Caco-2 (cell line): ENCODE measurements at regions of chr3 and their contacts with region 1.

Region 1: DNA sequence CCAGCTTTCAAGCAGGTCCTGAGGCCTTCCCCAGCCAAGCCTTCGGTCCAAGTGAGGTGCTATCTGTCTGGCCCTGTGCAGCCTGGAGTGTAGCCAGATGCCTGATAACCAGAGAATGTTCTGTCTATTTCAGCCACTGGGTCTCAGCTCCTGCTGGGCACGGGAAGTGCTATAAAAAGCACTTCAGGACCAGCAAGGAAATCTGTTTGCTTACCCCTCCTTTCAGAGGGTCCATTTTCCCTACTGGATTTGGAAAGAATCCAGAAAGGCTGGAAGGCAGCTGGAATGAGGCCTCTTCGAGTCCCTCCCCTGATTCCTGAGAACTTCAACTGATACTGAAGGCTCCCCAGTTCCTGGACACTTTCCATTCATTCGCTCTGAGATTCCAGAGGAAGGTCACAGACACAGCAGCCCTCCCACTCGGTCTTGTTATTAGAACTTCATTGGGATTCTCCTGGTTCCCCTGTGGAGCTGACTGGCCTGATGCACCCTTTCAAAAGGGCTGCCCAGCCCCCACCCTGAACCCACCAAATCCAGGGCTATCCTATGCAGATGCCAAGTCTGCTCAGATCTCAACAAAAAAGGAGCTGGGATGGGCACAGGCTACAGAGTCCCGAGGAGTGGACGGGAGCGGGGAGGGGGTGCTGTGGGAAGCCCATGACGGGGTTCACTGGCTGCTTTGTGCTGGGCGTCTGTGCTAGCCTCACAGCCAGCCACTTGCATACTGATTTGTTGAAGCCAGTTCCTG is 70.4 kb downstream of the UMPS start:
- DNase-seq: no peak
- H3K4me3 ChIP-seq: no peak overlapping the region
- H3K4me3 Mint-ChIP-seq: no peak overlapping the region
- H3K27ac Mint-ChIP-seq: no peak overlapping the region
- H3K4me1 ChIP-seq: no peaks in the 10 kb centered on the region
- H3K4me1 Mint-ChIP-seq: no peaks in the 10 kb centered on the region
- H3K27me3 ChIP-seq: no peaks in the 10 kb centered on the region
- H3K27me3 Mint-ChIP-seq: no peaks in the 10 kb centered on the region
- CTCF ChIP-seq: no peak

Region 2: GRCh38 chr3:124627501-124627908 is 173.2 kb before region 1 on chr3:
- CTCF ChIA-PET with region 1: no interaction called
- POLR2A ChIA-PET with region 1: no interaction called
- intact Hi-C with region 1: no loop called
- DNase-seq: peak; percentile 81 to 89
- H3K4me3 ChIP-seq: no peak overlapping the region
- H3K4me3 Mint-ChIP-seq: peak overlapping the region; percentile 46
- H3K27ac Mint-ChIP-seq: peak overlapping the region; percentile 62
- H3K4me1 ChIP-seq: peaks cover 70% of the 10 kb centered on the region
- H3K4me1 Mint-ChIP-seq: peaks cover 60% of the 10 kb centered on the region
- H3K27me3 ChIP-seq: no peaks in the 10 kb centered on the region
- H3K27me3 Mint-ChIP-seq: no peaks in the 10 kb centered on the region
- CTCF ChIP-seq: no peak

Region 3: GRCh38 chr3:124812291-124813265 is 11.9 kb after region 1 on chr3:
- CTCF ChIA-PET with region 1: no interaction called
- POLR2A ChIA-PET with region 1: no interaction called
- intact Hi-C with region 1: loop called (anchors 1 kb)
- DNase-seq: peak in 1 of 2 experiments; percentile 53
- H3K4me3 ChIP-seq: no peak overlapping the region
- H3K4me3 Mint-ChIP-seq: no peak overlapping the region
- H3K27ac Mint-ChIP-seq: peak overlapping the region; percentile 85
- H3K4me1 ChIP-seq: peaks cover 52% of the 10 kb centered on the region
- H3K4me1 Mint-ChIP-seq: peaks cover 14% of the 10 kb centered on the region
- H3K27me3 ChIP-seq: no peaks in the 10 kb centered on the region
- H3K27me3 Mint-ChIP-seq: no peaks in the 10 kb centered on the region
- CTCF ChIP-seq: no peak